CD4-positive, alpha-beta T cell (primary cell): ENCODE measurements at regions of chr14 and their contacts with region 1.

Region 1: GRCh38 chr14:105314287-105315200 is at the start of gene PACS2:
- DNase-seq: peak; percentile 43 to 97 (median 77)
- ATAC-seq: peak; percentile 69
- H3K4me3 ChIP-seq: peak within 1 kb of the TSS; percentile 61
- H3K4me3 Mint-ChIP-seq: peak within 1 kb of the TSS; percentile 95
- H3K27ac ChIP-seq: peak within 1 kb of the TSS in 1 of 2 donors; percentile 31
- H3K27ac Mint-ChIP-seq: peak within 1 kb of the TSS; percentile 88
- H3K4me1 ChIP-seq: peaks cover 27% of the 10 kb centered on the region
- H3K4me1 Mint-ChIP-seq: peaks cover 22% of the 10 kb centered on the region
- H3K27me3 ChIP-seq: no peaks in the 10 kb centered on the region
- H3K27me3 Mint-ChIP-seq: no peaks in the 10 kb centered on the region
- CTCF ChIP-seq: no peak
- total RNA-seq, gene PACS2: 57.7 to 61.5 TPM

Region 2: GRCh38 chr14:105020815-105021655 is 293.5 kb before region 1 on chr14 and contains the start of gene CDCA4:
- CTCF ChIA-PET with region 1: no interaction called
- POLR2A ChIA-PET with region 1: interaction called, 5 read pairs
- intact Hi-C with region 1: loop called in 1 of 2 experiments (anchors 5 kb)
- DNase-seq: peak; percentile 94 to 99 (median 98)
- ATAC-seq: peak; percentile 80
- H3K4me3 ChIP-seq: peak within 1 kb of the TSS; percentile 73
- H3K4me3 Mint-ChIP-seq: peak within 1 kb of the TSS; percentile 97
- H3K27ac ChIP-seq: peak within 1 kb of the TSS; percentile 71 to 73
- H3K27ac Mint-ChIP-seq: peak within 1 kb of the TSS; percentile 93
- H3K4me1 ChIP-seq: peaks cover 62% of the 10 kb centered on the region
- H3K4me1 Mint-ChIP-seq: peaks cover 62% of the 10 kb centered on the region
- H3K27me3 ChIP-seq: no peaks in the 10 kb centered on the region
- H3K27me3 Mint-ChIP-seq: no peaks in the 10 kb centered on the region
- CTCF ChIP-seq: no peak
- total RNA-seq, gene CDCA4: 17.7 to 18.8 TPM

Region 3: DNA sequence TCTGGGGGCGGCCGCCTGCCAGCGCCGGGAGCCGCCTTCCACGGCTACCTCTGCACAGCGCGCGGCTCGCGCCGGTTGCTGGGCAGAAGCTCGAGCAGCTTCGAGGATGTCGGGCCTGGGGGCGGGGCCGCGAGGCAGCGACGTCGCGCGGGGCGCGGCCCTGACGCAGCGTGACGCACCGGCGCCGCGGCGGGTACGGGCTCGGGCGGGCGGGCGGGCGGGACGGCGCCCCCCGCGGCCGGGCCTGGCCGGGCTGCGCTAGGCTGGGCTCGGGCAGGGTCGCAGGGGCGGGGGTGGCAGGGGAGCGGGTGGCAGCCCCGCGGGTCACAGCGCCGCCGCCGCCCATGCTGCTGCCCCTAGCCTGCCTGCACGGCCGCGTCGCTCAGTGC is 66.2 kb before region 1 on chr14 and contains the start of gene BTBD6:
- CTCF ChIA-PET with region 1: interaction called, 6 read pairs
- POLR2A ChIA-PET with region 1: interaction called, 18 read pairs
- intact Hi-C with region 1: loop called in 1 of 2 experiments (anchors 2 kb)
- DNase-seq: peak; percentile 76 to 96 (median 86)
- ATAC-seq: peak; percentile 88
- H3K4me3 ChIP-seq: peak within 1 kb of the TSS; percentile 66
- H3K4me3 Mint-ChIP-seq: peak within 1 kb of the TSS; percentile 87
- H3K27ac ChIP-seq: peak within 1 kb of the TSS; percentile 33 to 53
- H3K27ac Mint-ChIP-seq: peak within 1 kb of the TSS; percentile 82
- H3K4me1 ChIP-seq: peaks cover 27% of the 10 kb centered on the region
- H3K4me1 Mint-ChIP-seq: peaks cover 27% of the 10 kb centered on the region
- H3K27me3 ChIP-seq: no peaks in the 10 kb centered on the region
- H3K27me3 Mint-ChIP-seq: no peaks in the 10 kb centered on the region
- CTCF ChIP-seq: no peak
- total RNA-seq, gene BTBD6: 36.9 to 37.6 TPM

Region 4: DNA sequence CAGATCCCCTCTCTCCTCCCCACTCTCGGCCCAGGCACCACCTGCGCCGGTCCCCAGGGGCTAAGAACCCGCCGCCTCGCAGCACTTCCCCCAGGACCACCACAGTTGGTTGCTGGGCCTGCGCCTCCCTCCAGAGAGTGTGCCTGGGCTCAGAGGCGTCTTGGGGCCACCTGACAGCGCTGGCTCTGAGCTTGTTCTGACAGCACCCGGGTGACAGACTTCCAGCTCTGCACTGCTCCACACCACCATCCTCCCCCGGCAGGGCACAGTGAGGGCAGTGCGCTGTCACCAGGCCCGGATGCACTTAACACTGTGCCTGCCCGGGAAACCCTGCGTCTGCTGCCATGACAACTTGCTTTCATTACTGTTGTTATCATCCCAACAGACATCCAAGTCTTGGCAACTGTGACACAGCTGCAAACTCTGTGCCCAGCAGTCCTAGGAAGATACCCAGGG is 20.4 kb before region 1 on chr14:
- CTCF ChIA-PET with region 1: no interaction called
- POLR2A ChIA-PET with region 1: interaction called, 95 read pairs
- intact Hi-C with region 1: no loop called
- DNase-seq: peak; percentile 49 to 81 (median 64)
- ATAC-seq: peak; percentile 96
- H3K4me3 ChIP-seq: peak overlapping the region; percentile 32
- H3K4me3 Mint-ChIP-seq: peak overlapping the region; percentile 76
- H3K27ac ChIP-seq: peak overlapping the region; percentile 16 to 34
- H3K27ac Mint-ChIP-seq: peak overlapping the region; percentile 86
- H3K4me1 ChIP-seq: peaks cover 56% of the 10 kb centered on the region
- H3K4me1 Mint-ChIP-seq: peaks cover 39% of the 10 kb centered on the region
- H3K27me3 ChIP-seq: no peaks in the 10 kb centered on the region
- H3K27me3 Mint-ChIP-seq: no peaks in the 10 kb centered on the region
- CTCF ChIP-seq: no peak

Region 5: DNA sequence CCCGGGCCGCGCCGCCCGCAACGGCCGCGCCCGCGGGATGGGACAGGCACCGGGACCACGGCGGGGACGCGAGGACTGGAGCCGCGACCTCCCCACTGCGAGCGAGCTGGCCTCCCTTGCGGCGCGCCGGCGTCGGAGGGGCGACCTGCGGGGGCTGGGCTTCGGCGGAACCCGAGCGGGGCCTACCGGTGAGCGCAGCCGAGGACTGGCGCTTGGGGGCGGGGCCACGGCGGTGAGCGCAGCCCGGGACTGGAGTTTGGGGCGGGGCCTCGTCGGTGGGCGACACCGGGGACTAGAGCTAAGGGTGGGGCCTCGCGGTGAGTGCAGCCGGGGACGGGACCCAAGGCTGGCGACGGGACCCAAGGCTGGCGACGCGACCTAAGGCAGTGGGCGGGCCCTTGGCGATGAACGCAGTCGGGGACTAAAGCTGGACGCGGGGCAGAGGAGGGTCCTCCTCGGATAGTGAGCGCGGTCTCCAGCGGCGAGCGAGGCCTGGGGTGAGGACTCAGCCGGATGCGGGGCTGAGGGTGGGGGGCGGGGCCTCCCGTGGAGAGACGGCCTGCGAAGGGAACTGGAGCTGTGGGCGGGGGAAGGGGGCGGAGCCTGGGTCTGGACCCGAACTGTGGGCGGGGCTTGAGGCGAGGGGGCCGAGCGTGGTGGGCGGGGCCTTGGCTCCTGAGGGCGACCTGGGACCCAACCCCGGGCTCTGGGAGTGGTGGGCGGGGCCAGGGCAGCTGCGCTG is 13.6 kb before region 1 on chr14 and contains the start of gene BRF1:
- CTCF ChIA-PET with region 1: interaction called, 6 read pairs
- POLR2A ChIA-PET with region 1: interaction called, 95 read pairs
- intact Hi-C with region 1: loop called (anchors 1 kb)
- DNase-seq: peak; percentile 95 to 100 (median 98)
- ATAC-seq: peak; percentile 88
- H3K4me3 ChIP-seq: peak within 1 kb of the TSS; percentile 71
- H3K4me3 Mint-ChIP-seq: peak within 1 kb of the TSS; percentile 98
- H3K27ac ChIP-seq: peak within 1 kb of the TSS; percentile 79 to 88
- H3K27ac Mint-ChIP-seq: peak within 1 kb of the TSS; percentile 85
- H3K4me1 ChIP-seq: peaks cover 37% of the 10 kb centered on the region
- H3K4me1 Mint-ChIP-seq: peaks cover 46% of the 10 kb centered on the region
- H3K27me3 ChIP-seq: no peaks in the 10 kb centered on the region
- H3K27me3 Mint-ChIP-seq: no peaks in the 10 kb centered on the region
- CTCF ChIP-seq: no peak
- total RNA-seq, gene BRF1: 77.4 to 77.7 TPM

Region 6: DNA sequence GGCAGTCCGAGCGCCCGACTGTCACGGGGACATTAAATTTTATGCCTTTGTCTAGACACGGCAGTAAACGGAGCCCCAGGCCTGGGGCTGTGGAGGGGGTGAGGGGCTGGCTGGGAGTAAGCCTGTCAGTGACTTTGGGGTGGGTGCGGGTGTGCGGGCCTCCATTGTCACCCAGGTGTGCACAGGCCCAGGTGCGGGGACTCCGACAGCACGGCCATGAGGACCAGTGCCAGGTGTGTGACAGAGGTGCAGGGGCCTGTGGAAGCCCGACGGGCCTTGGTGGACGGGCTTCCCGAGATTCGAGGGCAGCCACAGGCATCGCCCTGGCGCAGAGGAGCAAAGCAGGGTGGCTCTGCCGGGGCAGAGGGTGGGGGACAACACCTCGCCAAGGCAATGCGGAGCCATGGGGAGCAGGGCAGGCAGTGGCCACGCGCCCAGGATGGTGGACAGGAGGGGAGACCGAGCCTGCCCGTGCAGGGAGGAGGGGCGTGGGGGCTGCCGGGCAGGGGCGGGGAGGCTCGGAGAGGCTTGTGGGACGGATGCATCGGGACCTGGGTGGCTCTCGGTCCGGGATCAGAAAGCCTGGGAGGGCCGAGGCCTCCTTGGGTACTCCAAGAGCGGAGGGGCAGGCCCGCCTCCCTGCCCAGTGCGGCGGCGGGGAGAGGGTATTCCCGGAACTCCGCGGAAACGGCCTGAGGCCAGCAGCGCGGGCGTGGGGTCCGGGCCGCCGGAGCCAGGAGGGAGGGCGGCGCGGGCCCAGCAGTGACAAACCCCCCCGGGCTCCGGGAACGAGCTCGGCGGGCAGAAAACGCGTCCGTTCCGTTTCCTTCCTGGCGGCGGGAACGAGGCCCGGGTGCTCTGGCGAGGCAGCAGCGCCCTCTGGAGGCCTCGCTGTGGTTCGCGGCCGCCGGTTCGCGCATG is 213.4 kb after region 1 on chr14:
- CTCF ChIA-PET with region 1: no interaction called
- POLR2A ChIA-PET with region 1: no interaction called
- intact Hi-C with region 1: loop called in 1 of 2 experiments (anchors 5 kb)
- DNase-seq: peak; percentile 63 to 92 (median 77)
- ATAC-seq: peak; percentile 65
- H3K4me3 ChIP-seq: peak overlapping the region; percentile 47
- H3K4me3 Mint-ChIP-seq: peak overlapping the region; percentile 87
- H3K27ac ChIP-seq: no peak overlapping the region
- H3K27ac Mint-ChIP-seq: no peak overlapping the region
- H3K4me1 ChIP-seq: peaks cover 39% of the 10 kb centered on the region
- H3K4me1 Mint-ChIP-seq: peaks cover 17% of the 10 kb centered on the region
- H3K27me3 ChIP-seq: peaks cover 19 to 23% of the 10 kb centered on the region in 2 experiments
- H3K27me3 Mint-ChIP-seq: peaks cover 22% of the 10 kb centered on the region
- CTCF ChIP-seq: peak; percentile 69

Region 7: GRCh38 chr14:105748194-105748578 is 433.6 kb after region 1 on chr14:
- CTCF ChIA-PET with region 1: no interaction called
- POLR2A ChIA-PET with region 1: no interaction called
- intact Hi-C with region 1: no loop called
- DNase-seq: no peak
- ATAC-seq: no peak
- H3K4me3 ChIP-seq: no peak overlapping the region
- H3K4me3 Mint-ChIP-seq: no peak overlapping the region
- H3K27ac ChIP-seq: no peak overlapping the region
- H3K27ac Mint-ChIP-seq: no peak overlapping the region
- H3K4me1 ChIP-seq: no peaks in the 10 kb centered on the region
- H3K4me1 Mint-ChIP-seq: no peaks in the 10 kb centered on the region
- H3K27me3 ChIP-seq: no peaks in the 10 kb centered on the region
- H3K27me3 Mint-ChIP-seq: no peaks in the 10 kb centered on the region
- CTCF ChIP-seq: no peak